Activated naive CD4-positive, alpha-beta T cell treated with anti-CD3 and anti-CD28 coated beads, Interleukin-2, amount 10 ng/mL, durations not matched to agents 7 days and 5 days (primary cell): ENCODE measurements at regions of chr9 and their contacts with region 1.

Region 1: GRCh38 chr9:21789541-21790037 is 12.8 kb upstream of the MTAP start:
- DNase-seq: peak; percentile 71
- H3K4me3 Mint-ChIP-seq: peak overlapping the region; percentile 67
- H3K27ac Mint-ChIP-seq: no peak overlapping the region
- H3K4me1 Mint-ChIP-seq: peaks cover 5% of the 10 kb centered on the region
- H3K27me3 Mint-ChIP-seq: peaks cover 36% of the 10 kb centered on the region

Region 2: DNA sequence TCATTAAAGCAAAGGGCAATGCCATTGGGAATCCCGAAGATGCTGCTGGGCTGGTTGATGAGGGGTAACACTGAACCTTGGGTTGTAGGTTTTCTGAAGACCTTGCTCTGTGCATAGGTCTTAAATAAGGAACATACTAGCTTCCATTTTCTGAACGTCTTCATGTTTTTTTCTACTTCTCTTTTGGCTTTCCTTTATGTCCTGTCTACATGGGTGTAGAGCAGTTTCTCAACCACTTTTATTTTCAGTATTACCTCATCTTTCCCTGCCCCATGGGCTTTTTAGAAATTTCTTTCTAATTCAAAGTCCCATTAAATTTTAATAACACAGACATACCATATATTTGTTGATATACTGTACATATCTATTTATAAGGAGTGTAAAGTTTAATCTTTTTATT is 549.7 kb before region 1 on chr9 and contains the start of gene IFNA14:
- CTCF ChIA-PET with region 1: interaction called, 12 read pairs
- DNase-seq: no peak
- H3K4me3 Mint-ChIP-seq: no peak within 1 kb of the TSS
- H3K27ac Mint-ChIP-seq: no peak within 1 kb of the TSS
- H3K4me1 Mint-ChIP-seq: peaks cover 11% of the 10 kb centered on the region
- H3K27me3 Mint-ChIP-seq: peaks cover 33% of the 10 kb centered on the region

Region 3: GRCh38 chr9:21465859-21466518 is 323.6 kb before region 1 on chr9:
- CTCF ChIA-PET with region 1: interaction called, 21 read pairs
- DNase-seq: no peak
- H3K4me3 Mint-ChIP-seq: no peak overlapping the region
- H3K27ac Mint-ChIP-seq: no peak overlapping the region
- H3K4me1 Mint-ChIP-seq: no peaks in the 10 kb centered on the region
- H3K27me3 Mint-ChIP-seq: peaks cover 24% of the 10 kb centered on the region

Region 4: DNA sequence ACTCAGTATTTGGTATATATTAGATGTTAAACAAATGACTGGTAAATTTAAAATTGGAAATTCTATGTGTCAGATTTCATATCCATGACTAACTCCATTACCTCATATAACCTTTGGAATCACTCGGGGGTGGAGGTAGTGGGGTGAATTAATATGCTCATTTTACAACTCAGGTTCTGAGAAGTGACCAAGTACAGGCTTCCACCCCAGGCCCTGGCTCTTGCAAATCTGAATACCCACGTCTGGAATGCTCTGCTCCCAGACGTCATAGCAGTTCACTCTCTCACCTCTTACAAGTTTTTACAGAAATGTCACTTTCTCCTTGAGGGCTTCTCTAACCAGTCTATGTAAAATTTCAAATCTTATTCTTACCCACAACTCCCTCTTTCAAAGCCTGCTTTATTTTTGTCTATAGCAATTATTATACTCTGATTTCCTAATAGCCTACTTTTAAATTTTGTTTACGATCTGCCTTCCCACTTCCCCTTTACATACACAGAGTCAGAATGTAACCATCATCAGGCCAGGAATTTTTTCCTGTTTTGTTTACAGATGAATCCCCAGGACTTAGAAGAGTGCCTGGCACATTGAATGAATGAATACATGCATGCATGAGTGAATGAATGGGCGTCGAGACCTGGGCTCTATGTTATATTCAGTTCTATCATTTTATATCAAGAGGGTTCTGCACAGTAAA is 173.4 kb before region 1 on chr9:
- CTCF ChIA-PET with region 1: no interaction called
- DNase-seq: no peak
- H3K4me3 Mint-ChIP-seq: no peak overlapping the region
- H3K27ac Mint-ChIP-seq: no peak overlapping the region
- H3K4me1 Mint-ChIP-seq: peaks cover 37% of the 10 kb centered on the region
- H3K27me3 Mint-ChIP-seq: no peaks in the 10 kb centered on the region

Region 5: DNA sequence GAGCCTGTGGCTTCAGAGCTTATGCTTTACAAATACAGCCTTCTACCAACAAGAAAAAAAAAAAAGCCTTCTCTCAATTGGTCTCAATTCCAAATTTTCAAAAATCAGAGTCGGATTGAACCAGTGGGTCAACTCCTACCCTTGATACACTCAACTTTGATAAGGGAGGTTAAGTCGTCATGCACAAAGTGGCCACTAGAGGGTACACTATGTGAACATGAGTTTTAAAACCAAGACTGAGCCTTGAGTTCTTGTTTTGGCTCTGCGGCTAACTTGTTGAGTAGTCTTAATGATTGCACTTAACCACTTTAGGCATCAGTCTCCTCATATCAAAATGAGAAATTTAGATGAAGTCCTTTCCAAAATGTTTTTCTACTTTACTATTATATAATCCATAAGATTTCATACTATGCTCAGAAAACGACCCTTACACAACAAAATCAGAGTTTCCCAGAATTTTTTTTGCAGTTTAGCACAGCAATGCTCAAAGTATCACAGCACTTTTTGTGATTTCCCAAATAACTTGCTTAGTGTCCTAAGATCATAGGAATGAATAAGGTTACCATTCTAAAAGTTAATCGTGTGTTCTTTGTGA is 80.0 kb before region 1 on chr9:
- CTCF ChIA-PET with region 1: interaction called, 21 read pairs
- DNase-seq: peak; percentile 76
- H3K4me3 Mint-ChIP-seq: no peak overlapping the region
- H3K27ac Mint-ChIP-seq: no peak overlapping the region
- H3K4me1 Mint-ChIP-seq: peaks cover 4% of the 10 kb centered on the region
- H3K27me3 Mint-ChIP-seq: peaks cover 13% of the 10 kb centered on the region

Region 6: GRCh38 chr9:22416692-22417060 is 627.1 kb after region 1 on chr9:
- CTCF ChIA-PET with region 1: no interaction called
- DNase-seq: no peak
- H3K4me3 Mint-ChIP-seq: no peak overlapping the region
- H3K27ac Mint-ChIP-seq: no peak overlapping the region
- H3K4me1 Mint-ChIP-seq: no peaks in the 10 kb centered on the region
- H3K27me3 Mint-ChIP-seq: no peaks in the 10 kb centered on the region